AG04450 (cell line): ENCODE measurements at regions of chr7 and their contacts with region 1.

Region 1: GRCh38 chr7:155598810-155599210 is 45.7 kb upstream of the RBM33 start:
- DNase-seq: peak; percentile 27
- H3K4me3 ChIP-seq: no peak overlapping the region
- H3K27ac ChIP-seq: no peak overlapping the region
- H3K27me3 ChIP-seq: no peaks in the 10 kb centered on the region
- CTCF ChIP-seq: peak; percentile 99

Region 2: GRCh38 chr7:155477476-155477875 is 121.3 kb before region 1 on chr7:
- CTCF ChIA-PET with region 1: no interaction called
- POLR2A ChIA-PET with region 1: no interaction called
- DNase-seq: no peak
- H3K4me3 ChIP-seq: no peak overlapping the region
- H3K27ac ChIP-seq: no peak overlapping the region
- H3K27me3 ChIP-seq: peaks cover 14% of the 10 kb centered on the region
- CTCF ChIP-seq: no peak

Region 3: DNA sequence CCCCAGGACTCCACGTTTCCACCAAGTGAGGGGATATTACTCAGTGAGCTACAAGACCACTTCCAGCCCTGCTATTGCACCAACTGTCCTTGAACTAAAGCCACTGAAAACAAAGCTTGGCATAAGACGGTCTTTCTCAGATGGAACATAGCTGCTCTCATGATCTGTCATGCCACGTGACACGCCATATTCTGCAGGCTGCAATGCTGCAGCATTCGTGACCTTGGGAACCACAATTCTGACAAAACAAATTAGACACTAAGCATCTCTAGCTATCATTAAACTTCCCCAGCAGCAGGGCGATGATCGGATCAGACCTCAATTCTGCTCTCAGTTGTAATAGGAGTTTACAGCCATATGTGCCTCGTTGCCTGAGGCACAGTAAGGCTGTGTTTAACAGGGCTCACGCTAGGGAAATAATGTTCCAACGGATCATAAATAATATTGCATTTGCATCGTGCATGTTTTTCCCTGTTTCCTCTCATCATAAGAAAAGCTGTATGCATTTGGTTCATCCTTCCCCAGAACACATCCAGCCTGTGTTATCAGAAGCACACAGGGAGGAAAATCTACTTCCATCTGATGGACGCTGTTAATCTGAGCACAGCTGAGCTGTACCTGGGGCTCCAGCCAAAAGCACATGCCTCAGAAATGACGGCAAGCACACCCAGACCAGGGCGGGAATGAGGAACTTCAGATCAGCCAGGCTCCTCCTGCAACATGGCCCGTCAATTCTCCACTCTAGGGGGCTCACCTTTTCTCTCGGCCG is 13.9 kb before region 1 on chr7:
- CTCF ChIA-PET with region 1: interaction called, 25 read pairs
- POLR2A ChIA-PET with region 1: no interaction called
- DNase-seq: peak; percentile 23
- H3K4me3 ChIP-seq: no peak overlapping the region
- H3K27ac ChIP-seq: no peak overlapping the region
- H3K27me3 ChIP-seq: peaks cover 11% of the 10 kb centered on the region
- CTCF ChIP-seq: no peak

Region 4: GRCh38 chr7:155652156-155653124 is 53.6 kb after region 1 on chr7:
- CTCF ChIA-PET with region 1: interaction called, 16 read pairs
- POLR2A ChIA-PET with region 1: no interaction called
- DNase-seq: no peak
- H3K4me3 ChIP-seq: no peak overlapping the region
- H3K27ac ChIP-seq: no peak overlapping the region
- H3K27me3 ChIP-seq: no peaks in the 10 kb centered on the region
- CTCF ChIP-seq: no peak

Region 5: GRCh38 chr7:155722118-155722517 is 123.3 kb after region 1 on chr7:
- CTCF ChIA-PET with region 1: interaction called, 18 read pairs
- POLR2A ChIA-PET with region 1: no interaction called
- DNase-seq: no peak
- H3K4me3 ChIP-seq: no peak overlapping the region
- H3K27ac ChIP-seq: no peak overlapping the region
- H3K27me3 ChIP-seq: no peaks in the 10 kb centered on the region
- CTCF ChIP-seq: no peak

Region 6: GRCh38 chr7:155746188-155746587 is 147.4 kb after region 1 on chr7:
- CTCF ChIA-PET with region 1: interaction called, 257 read pairs
- POLR2A ChIA-PET with region 1: no interaction called
- DNase-seq: no peak
- H3K4me3 ChIP-seq: no peak overlapping the region
- H3K27ac ChIP-seq: no peak overlapping the region
- H3K27me3 ChIP-seq: no peaks in the 10 kb centered on the region
- CTCF ChIP-seq: no peak